Heart left ventricle (tissue), 16 donors: ENCODE measurements at regions of chrX and their contacts with region 1.

Region 1: DNA sequence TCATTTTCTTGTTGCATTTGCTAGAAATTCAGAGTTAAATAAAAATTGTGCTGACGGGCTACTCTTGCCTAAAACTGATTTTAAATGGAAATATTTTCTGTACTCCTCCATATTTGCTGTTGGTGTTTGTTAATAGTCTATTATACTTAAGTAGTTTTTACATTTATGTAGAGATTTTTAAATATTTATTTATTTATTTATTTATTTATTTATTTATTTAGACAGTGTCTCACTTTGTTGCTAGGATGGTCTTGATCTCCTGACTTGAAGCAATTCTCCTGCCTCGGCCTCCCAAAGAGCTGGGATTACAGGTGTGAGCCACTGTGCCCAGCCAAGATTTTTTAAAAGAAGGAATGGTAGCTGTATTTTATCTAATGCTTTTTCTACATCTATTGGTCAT is 68.1 kb downstream of the TMEM164 start:
- DNase-seq: no peak
- ATAC-seq: no peak
- H3K4me3 ChIP-seq: no peak overlapping the region
- H3K27ac ChIP-seq: no peak overlapping the region
- H3K4me1 ChIP-seq: peaks cover 0 to 16% (median 2%) of the 10 kb centered on the region in 12 donors
- H3K27me3 ChIP-seq: no peaks in the 10 kb centered on the region
- CTCF ChIP-seq: no peak
- POLR2A ChIP-seq: no peak

Region 2: DNA sequence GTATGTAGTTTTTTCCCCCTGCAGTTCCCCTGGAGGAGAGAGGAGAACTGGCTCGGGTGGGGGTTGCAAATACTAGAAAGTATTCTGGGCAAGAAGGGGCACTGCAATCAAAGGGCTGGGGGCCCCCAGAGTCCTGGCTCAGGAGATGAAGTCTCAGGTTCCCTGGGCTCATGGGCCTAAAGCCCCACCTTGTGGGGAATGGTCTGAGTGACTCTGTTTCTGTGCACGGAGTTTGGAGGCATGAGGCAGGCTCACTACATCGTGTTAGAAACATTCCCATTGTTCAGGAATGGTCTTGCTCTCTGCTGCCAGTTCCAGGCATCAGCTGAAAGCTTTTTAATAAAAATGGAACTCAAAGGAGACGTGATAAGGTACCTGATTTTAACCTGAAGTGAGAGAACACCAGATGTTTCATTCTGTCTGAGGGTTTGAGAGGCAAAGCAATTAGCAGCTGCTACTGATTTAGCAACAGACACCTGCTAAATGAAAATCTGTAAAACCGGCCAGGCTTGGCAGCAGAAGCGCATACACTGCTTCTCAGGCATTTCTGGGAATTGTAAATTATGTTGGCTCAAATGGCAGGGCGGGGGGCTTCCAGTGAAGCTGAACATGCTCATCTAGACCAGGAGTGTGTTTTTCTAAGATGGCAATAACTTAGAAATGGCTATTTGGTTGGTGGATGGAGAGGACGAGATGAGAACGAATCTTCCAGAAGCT is 54.6 kb after region 1 on chrX:
- intact Hi-C with region 1: loop called in 1 of 10 experiments (anchors 10 kb)
- DNase-seq: no peak
- ATAC-seq: peak; percentile 41 to 63 (median 54)
- H3K4me3 ChIP-seq: no peak overlapping the region
- H3K27ac ChIP-seq: peak overlapping the region in 2 of 12 donors; percentile 14 to 41
- H3K4me1 ChIP-seq: peaks cover 0 to 11% (median 0%) of the 10 kb centered on the region in 12 donors
- H3K27me3 ChIP-seq: peaks cover 0 to 7% (median 0%) of the 10 kb centered on the region in 9 donors
- CTCF ChIP-seq: peak in 5 of 12 donors; percentile 11 to 32 (median 13)
- POLR2A ChIP-seq: no peak